Ovary (tissue), 10 donors: ENCODE measurements at regions of chr19 and their contacts with region 1.

Region 1: DNA sequence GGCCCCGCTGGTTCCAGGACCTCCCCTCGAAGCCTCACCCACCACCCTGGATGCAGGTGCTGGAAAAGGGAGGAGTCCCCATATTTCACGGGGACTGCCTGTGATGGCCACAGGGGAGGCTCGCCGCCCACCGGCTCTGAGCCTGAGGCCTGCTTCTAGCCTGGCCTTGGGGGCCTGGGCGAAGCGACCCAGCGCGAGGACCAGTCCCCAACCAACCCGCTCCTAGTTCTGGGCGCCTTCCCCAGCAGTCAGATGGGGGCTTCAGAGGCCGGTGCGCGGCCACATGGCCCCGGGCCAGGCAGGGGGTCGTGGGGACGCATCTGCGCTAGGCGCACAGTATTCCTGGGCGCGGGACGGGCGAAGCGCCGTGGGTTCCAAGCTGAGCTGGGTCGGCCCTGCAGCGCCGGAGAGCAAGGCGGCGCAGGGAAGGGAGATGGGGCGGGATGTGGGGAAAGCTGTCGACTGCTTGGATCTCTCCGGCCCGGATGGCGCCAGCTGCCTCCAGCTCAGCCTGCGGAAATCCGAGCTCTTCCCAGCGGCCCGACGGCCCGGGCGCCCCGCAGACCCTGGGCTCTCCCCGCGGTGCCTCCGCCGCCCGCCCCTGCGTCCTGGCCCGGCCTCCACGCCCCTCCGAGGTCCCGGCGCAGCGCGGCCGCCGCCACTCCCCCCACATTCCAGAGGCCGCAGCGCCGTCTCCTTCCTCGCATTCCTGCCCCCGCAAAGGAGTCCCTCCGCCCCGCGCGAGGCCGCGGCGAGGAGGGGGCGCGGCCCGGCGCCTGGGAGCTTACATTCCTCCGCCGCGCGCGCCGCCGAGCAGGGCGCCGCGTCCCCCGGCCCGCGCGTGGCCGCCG is at the start of gene WTIP:
- DNase-seq: peak; percentile 79 to 92 (median 88)
- H3K4me3 ChIP-seq: peak within 1 kb of the TSS; percentile 47
- H3K27ac ChIP-seq: peak within 1 kb of the TSS; percentile 86 to 87
- H3K4me1 ChIP-seq: peaks cover 9% of the 10 kb centered on the region
- H3K27me3 ChIP-seq: no peaks in the 10 kb centered on the region
- CTCF ChIP-seq: no peak
- EP300 ChIP-seq: no peak
- POLR2A ChIP-seq: no peak
- total RNA-seq, gene WTIP: 13.4 to 38.4 (median 34.0) TPM

Region 2: GRCh38 chr19:34317311-34317927 is 163.8 kb before region 1 on chr19:
- intact Hi-C with region 1: no loop called
- DNase-seq: no peak
- H3K4me3 ChIP-seq: no peak overlapping the region
- H3K27ac ChIP-seq: peak overlapping the region; percentile 2 to 39
- H3K4me1 ChIP-seq: peaks cover 19% of the 10 kb centered on the region
- H3K27me3 ChIP-seq: no peaks in the 10 kb centered on the region
- CTCF ChIP-seq: no peak
- EP300 ChIP-seq: no peak
- POLR2A ChIP-seq: no peak

Region 3: DNA sequence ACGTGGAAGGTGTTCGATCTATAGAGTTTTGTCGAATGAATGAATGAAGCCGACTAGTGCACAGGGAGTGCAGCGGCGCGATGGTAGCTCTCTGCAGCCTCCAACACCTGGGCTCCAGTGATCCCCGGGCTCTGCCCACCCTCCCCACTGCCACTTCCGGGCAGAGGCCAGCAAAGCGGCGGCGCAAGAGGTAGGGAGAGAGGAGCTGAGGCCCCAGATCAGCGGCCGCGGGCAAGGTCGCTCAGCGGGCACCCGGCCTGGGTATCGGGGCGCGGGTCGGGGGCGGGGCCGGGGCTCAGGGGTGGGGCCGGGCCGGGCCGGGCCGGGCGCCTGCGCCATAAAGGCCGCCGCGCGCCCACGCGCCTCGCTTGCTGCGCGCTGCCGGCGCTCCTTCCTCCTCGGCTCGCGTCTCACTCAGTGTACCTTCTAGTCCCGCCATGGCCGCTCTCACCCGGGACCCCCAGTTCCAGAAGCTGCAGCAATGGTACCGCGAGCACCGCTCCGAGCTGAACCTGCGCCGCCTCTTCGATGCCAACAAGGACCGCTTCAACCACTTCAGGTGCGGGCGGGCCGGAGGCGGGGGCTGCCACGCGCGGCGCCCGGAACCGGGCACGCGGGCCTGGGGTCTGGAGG is 116.2 kb before region 1 on chr19 and contains the start of gene GPI:
- intact Hi-C with region 1: loop called in 1 of 4 experiments (anchors 10 kb)
- DNase-seq: peak; percentile 39 to 67 (median 58)
- H3K4me3 ChIP-seq: peak within 1 kb of the TSS; percentile 67
- H3K27ac ChIP-seq: peak within 1 kb of the TSS; percentile 31 to 43
- H3K4me1 ChIP-seq: peaks cover 14% of the 10 kb centered on the region
- H3K27me3 ChIP-seq: no peaks in the 10 kb centered on the region
- CTCF ChIP-seq: no peak
- EP300 ChIP-seq: no peak
- POLR2A ChIP-seq: no peak
- total RNA-seq, gene GPI: 70.1 to 187 (median 128) TPM

Region 4: GRCh38 chr19:34430738-34431625 is 50.2 kb before region 1 on chr19:
- intact Hi-C with region 1: loop called in 1 of 4 experiments (anchors 5 kb)
- DNase-seq: no peak
- H3K4me3 ChIP-seq: no peak overlapping the region
- H3K27ac ChIP-seq: no peak overlapping the region
- H3K4me1 ChIP-seq: peaks cover 14% of the 10 kb centered on the region
- H3K27me3 ChIP-seq: no peaks in the 10 kb centered on the region
- CTCF ChIP-seq: no peak
- EP300 ChIP-seq: no peak
- POLR2A ChIP-seq: no peak

Region 5: DNA sequence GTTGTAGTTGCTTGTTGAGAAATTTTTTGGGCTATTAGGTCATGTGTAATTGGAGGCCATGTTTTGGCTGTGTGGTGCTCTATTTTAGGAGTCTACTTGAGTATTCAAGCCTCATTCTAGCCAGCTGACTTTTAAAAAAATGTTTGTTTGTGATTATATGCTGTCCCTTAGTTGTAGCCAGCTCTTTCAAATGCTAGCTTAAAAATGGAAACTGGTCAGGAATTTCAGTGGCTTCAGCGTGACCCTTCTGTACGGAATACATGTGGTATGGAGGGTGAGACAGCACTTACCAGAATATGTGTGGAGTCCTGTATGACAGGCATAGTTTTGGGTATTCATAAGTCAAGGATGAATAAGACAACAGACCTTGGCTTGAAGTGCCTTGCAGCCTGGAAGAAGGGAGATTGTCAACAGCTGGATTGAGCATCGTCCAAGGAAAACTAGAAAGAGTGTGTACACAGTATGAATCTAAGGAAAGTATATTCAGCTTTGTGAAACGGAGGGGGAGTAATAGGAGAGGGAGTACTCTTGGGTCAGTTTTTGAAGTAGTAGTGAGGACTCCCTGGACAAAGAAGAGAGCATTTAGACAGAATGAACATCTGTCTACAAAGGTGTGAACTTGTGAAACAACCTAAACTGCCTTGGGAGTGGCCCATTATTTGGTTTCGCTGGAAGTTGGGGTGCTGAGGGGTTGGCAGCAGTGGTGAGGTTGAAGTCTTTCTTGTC is 19.7 kb before region 1 on chr19:
- intact Hi-C with region 1: no loop called
- DNase-seq: no peak
- H3K4me3 ChIP-seq: no peak overlapping the region
- H3K27ac ChIP-seq: peak overlapping the region in 1 of 2 donors; percentile 30
- H3K4me1 ChIP-seq: peaks cover 11% of the 10 kb centered on the region
- H3K27me3 ChIP-seq: no peaks in the 10 kb centered on the region
- CTCF ChIP-seq: no peak
- EP300 ChIP-seq: no peak
- POLR2A ChIP-seq: no peak